Mammary epithelial cell (primary cell): ENCODE measurements at regions of chr1 and their contacts with region 1.

Region 1: GRCh38 chr1:202810615-202811295 is at the start of gene PCAT6:
- DNase-seq: peak; percentile 91
- H3K4me3 ChIP-seq: peak within 1 kb of the TSS; percentile 43 to 60 (median 58)
- H3K27ac ChIP-seq: peak within 1 kb of the TSS; percentile 62
- H3K4me1 ChIP-seq: peaks cover 39% of the 10 kb centered on the region
- H3K27me3 ChIP-seq: no peaks in the 10 kb centered on the region
- CTCF ChIP-seq: no peak
- total RNA-seq, gene PCAT6: 0.17 to 5.6 TPM

Region 2: DNA sequence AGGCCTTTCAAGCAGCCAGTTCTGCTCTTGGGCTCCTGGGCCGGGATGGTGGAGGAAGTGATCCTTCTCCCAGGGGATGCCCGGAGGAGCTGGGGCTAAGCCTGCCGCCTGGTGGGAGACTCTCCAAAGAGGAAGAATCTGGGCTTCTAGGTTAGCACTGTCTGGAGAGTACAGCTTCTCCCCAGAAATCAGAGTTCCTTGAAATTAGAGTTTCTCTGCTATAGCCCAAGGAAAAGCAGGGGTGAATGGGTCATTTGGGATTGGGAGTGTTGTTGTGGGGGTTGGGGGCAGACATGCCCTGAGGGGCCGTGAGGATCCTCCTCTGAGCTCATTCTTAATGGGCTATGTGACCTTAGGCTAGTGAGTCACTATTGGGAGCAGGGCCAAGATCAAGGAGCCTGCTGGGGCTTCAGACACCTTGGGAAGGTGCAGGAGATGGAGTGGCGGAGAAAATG is 610.6 kb before region 1 on chr1:
- CTCF ChIA-PET with region 1: no interaction called
- dilution Hi-C with region 1: no loop called
- in situ Hi-C with region 1: no loop called
- intact Hi-C with region 1: no loop called
- DNase-seq: peak; percentile 52
- H3K4me3 ChIP-seq: no peak overlapping the region
- H3K27ac ChIP-seq: no peak overlapping the region
- H3K4me1 ChIP-seq: peaks cover 15% of the 10 kb centered on the region
- H3K27me3 ChIP-seq: no peaks in the 10 kb centered on the region
- CTCF ChIP-seq: no peak

Region 3: DNA sequence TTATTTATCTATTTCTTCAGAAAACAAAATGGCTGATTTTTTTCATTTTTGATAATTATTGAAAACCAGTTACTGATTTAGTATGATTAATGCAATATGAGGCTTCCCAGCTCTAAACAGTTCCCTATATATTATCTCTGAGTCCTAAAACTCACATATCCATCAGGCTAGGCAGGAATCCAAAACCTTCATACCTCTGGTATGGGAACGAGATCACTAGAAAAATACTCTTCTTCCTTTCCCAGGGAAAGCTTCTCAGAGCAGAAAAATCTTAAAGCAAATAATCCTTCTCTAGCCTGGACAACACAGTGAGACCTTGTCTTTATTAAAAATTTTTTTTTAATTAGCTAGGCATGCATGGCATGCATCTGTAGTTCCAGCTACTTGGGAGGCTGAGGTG is 45.0 kb before region 1 on chr1:
- CTCF ChIA-PET with region 1: no interaction called
- dilution Hi-C with region 1: no loop called
- in situ Hi-C with region 1: no loop called
- intact Hi-C with region 1: loop called (anchors 5 kb)
- DNase-seq: no peak
- H3K4me3 ChIP-seq: no peak overlapping the region
- H3K27ac ChIP-seq: no peak overlapping the region
- H3K4me1 ChIP-seq: no peaks in the 10 kb centered on the region
- H3K27me3 ChIP-seq: no peaks in the 10 kb centered on the region
- CTCF ChIP-seq: no peak

Region 4: GRCh38 chr1:202861420-202862200 is 50.9 kb after region 1 on chr1:
- CTCF ChIA-PET with region 1: no interaction called
- dilution Hi-C with region 1: no loop called
- in situ Hi-C with region 1: loop called in 1 of 2 experiments (anchors 5 kb)
- intact Hi-C with region 1: no loop called
- DNase-seq: peak; percentile 90
- H3K4me3 ChIP-seq: peak overlapping the region; percentile 70 to 78 (median 73)
- H3K27ac ChIP-seq: no peak overlapping the region
- H3K4me1 ChIP-seq: peaks cover 4% of the 10 kb centered on the region
- H3K27me3 ChIP-seq: no peaks in the 10 kb centered on the region
- CTCF ChIP-seq: no peak

Region 5: GRCh38 chr1:202998836-202999750 is 188.3 kb after region 1 on chr1:
- CTCF ChIA-PET with region 1: no interaction called
- dilution Hi-C with region 1: no loop called
- in situ Hi-C with region 1: no loop called
- intact Hi-C with region 1: loop called (anchors 2 kb)
- DNase-seq: peak; percentile 28
- H3K4me3 ChIP-seq: no peak overlapping the region
- H3K27ac ChIP-seq: no peak overlapping the region
- H3K4me1 ChIP-seq: no peaks in the 10 kb centered on the region
- H3K27me3 ChIP-seq: no peaks in the 10 kb centered on the region
- CTCF ChIP-seq: peak; percentile 80 to 86